ENCODE measurements at regions of chr1 and their contacts with region 1.

Region 1: GRCh38 chr1:203702130-203702577 is 62.8 kb upstream of the LAX1 start:
- DNase-seq: peak; percentile 39 to 49
- H3K4me3 ChIP-seq: no peak overlapping the region
- H3K27ac ChIP-seq: no peak overlapping the region
- H3K4me1 ChIP-seq: no peaks in the 10 kb centered on the region
- H3K27me3 ChIP-seq: no peaks in the 10 kb centered on the region
- CTCF ChIP-seq: peak; percentile 99

Region 2: DNA sequence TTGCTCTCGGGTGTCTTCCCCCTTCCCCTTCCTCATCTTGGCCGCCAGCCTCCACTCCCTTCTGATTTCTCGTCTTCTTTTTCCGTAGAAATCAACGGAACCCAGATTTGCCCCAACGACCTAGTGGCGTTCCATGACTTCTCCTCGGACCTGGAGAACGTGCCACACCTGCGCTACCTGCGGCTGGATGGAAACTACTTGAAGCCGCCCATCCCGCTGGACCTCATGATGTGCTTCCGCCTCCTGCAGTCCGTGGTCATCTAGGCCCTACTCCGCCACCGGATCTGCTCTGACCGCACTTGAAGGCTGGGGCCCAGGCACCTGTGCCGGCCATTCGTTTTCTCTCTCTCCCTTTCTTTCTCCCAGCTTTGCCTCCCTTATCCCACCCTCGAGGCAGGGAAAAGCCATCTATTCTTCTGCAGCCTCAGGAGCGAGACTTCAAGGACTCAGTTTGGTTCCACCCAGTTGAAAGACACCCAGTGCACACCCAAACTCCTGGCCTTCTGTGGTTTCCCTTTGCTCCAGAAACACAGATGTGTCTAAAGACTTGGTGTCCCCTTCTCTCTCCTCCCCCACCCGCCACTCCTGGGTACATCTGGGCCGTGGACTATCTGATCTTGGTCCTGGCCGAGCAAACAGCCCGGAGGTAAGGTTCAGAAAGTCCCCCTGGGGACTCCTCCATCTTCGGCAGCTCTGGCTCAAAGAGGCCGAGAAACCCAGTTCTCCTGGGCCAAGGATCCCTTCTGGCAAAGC is 215.4 kb before region 1 on chr1:
- CTCF ChIA-PET with region 1: no interaction called
- POLR2A ChIA-PET with region 1: no interaction called
- intact Hi-C with region 1: loop called (anchors 5 kb)
- DNase-seq: no peak
- H3K4me3 ChIP-seq: peak overlapping the region; percentile 56; the same call in 1 of the 2 replicates
- H3K27ac ChIP-seq: no peak overlapping the region
- H3K4me1 ChIP-seq: peaks cover 4% of the 10 kb centered on the region
- H3K27me3 ChIP-seq: no peaks in the 10 kb centered on the region
- CTCF ChIP-seq: no peak

Region 3: DNA sequence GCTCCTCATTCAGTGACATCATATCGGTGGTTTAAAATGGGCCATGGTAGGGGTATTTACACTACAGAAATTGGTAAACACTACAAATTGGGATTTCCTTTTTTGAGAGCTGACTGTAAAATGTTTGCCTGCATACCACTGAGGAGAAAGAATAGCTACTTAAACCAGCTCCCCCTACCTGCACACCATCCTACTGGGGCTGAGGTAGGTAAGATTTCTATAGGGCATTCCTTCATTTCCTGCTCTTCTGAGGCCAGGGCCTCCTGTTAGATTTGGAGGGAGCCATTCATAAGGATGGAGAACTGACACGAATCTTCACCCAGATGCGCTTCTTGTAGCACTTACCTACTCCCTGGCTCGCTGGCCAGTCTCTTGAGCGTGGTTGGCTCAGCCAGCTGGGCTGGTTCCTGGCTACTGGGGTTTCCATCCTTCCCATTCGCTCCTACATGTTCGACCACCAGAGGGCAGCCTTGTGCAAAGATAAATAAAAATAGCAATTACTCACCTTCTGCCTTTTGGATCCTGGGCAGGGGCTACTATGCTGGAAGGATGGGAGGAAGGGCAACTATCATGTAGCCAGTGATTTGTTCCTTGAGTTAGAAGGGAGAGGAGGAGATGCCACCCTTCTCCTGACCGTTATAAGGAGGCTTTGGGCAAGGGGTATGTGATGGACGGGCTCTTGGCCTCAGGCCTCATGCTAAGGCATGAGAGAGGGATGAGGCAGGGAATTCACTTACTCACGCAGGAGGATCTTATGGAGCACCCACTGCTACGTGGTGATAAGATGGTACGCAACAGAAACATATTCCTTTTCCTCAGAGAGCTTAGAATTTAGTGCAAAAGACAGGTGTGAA is 197.5 kb before region 1 on chr1:
- CTCF ChIA-PET with region 1: interaction called, 13 read pairs
- POLR2A ChIA-PET with region 1: no interaction called
- intact Hi-C with region 1: loop called (anchors 1 kb)
- DNase-seq: peak; percentile 65 to 78
- H3K4me3 ChIP-seq: no peak overlapping the region
- H3K27ac ChIP-seq: no peak overlapping the region
- H3K4me1 ChIP-seq: peaks cover 15% of the 10 kb centered on the region
- H3K27me3 ChIP-seq: no peaks in the 10 kb centered on the region
- CTCF ChIP-seq: peak; percentile 95

Region 4: DNA sequence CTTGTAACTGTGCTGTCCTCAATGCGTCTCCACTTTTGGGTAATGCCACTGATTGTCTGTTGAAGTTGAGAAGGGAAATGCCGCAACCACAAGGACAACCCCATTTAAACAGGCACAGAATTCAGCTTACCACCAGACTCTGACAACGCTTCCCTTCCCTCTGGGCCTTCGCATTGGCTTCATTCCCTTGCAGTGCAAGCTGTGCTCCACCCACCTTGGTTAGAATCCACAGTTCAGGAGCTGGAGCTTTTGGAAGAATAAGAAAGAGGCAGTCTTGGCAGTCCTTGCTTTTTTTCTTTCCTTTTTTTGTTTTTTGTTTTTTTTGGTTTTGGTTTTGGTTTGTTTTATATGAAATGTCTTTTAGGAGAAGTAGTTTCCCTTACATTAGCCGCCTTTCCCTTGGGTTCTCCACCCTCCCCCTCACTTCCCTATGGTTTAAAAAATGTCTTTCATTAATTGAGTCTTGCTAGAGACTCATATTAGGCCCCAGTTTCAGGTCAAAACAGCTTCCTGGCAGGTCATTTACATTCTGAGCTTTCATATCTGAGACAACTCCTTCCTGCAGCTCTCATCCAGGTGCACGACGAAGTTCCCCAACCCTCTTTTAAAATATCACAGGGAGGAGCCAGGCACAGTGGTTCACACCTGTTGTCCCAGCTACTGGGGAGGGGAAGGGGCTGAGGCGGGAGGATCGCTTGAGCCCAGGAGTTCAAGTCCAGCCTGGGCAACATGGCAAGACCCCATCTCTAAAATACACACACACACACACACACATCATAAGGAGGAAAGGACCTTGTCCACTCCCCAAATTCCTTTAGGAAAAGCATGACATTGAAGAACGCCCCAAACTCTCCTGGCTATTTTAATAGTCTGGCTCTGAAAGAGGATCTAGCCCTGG is 42.2 kb after region 1 on chr1:
- CTCF ChIA-PET with region 1: no interaction called
- POLR2A ChIA-PET with region 1: no interaction called
- intact Hi-C with region 1: no loop called
- DNase-seq: no peak
- H3K4me3 ChIP-seq: no peak overlapping the region
- H3K27ac ChIP-seq: no peak overlapping the region
- H3K4me1 ChIP-seq: no peaks in the 10 kb centered on the region
- H3K27me3 ChIP-seq: no peaks in the 10 kb centered on the region
- CTCF ChIP-seq: no peak

Measured in PC-9 (cell line).